ENCODE measurements at regions of chr10 and their contacts with region 1.

Region 1: GRCh38 chr10:92592761-92593618 is at the start of gene KIF11:
- DNase-seq: peak; percentile 99
- H3K4me3 ChIP-seq: peak within 1 kb of the TSS; percentile 46 to 98 (median 84)
- H3K27ac ChIP-seq: peak within 1 kb of the TSS; percentile 93 to 98 (median 96)
- H3K4me1 ChIP-seq: peaks cover 6 to 54% (median 32%) of the 10 kb centered on the region in 6 donors
- H3K27me3 ChIP-seq: no peaks in the 10 kb centered on the region
- CTCF ChIP-seq: no peak
- POLR2A ChIP-seq: peak in 2 of 3 donors; percentile 88 to 96
- total RNA-seq, gene KIF11: 1.8 to 7.3 (median 5.1) TPM

Region 2: GRCh38 chr10:92689663-92690210 is 96.7 kb after region 1 on chr10 and contains the start of gene HHEX:
- intact Hi-C with region 1: loop called (anchors 10 kb)
- DNase-seq: peak; percentile 98
- H3K4me3 ChIP-seq: peak within 1 kb of the TSS; percentile 57 to 83 (median 71)
- H3K27ac ChIP-seq: peak within 1 kb of the TSS; percentile 82 to 99 (median 98)
- H3K4me1 ChIP-seq: peaks cover 4 to 76% (median 55%) of the 10 kb centered on the region in 6 donors
- H3K27me3 ChIP-seq: peaks cover 0 to 51% (median 0%) of the 10 kb centered on the region in 7 donors
- CTCF ChIP-seq: peak in 2 of 11 experiments; percentile 10 to 12
- POLR2A ChIP-seq: peak in 2 of 3 donors; percentile 61 to 93
- total RNA-seq, gene HHEX: 45.9 to 74.3 (median 51.9) TPM

Region 3: DNA sequence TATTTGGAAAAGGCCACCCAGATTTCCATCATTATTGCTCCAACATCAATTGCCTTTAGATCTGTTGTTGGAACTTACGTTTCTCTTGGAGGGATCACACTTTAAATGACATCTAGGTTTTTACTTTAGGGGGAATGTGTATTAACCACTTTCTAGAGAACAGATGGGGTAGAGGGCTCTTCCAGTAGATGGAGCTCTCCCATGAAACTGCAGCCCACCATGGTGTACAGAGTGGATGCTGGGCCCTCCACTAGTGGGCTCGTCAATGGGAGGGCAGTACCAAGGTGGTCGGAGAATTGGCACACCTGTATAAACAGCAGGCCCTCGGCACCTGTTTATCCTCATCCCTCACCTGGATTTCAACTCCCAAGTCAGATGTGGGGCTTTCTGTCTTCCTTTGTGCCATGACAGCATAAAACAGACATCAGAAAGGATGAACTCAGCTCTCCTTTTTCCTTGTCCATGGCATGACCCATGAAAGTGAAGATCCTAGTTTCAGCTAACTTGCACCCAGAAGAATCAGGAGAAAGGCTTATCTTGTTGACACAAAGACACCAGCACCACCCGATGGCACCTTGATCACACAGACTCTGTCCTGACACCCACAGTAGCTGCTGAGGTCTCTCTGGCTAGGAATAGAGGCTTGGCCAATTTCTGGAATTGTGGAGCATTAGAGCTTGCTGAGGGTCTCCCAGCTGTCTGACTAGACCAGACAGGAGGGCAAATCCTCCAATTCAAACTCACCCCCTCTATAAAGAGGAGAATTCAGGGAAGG is 631.2 kb after region 1 on chr10:
- intact Hi-C with region 1: no loop called
- DNase-seq: no peak
- H3K4me3 ChIP-seq: no peak overlapping the region
- H3K27ac ChIP-seq: no peak overlapping the region
- H3K4me1 ChIP-seq: peaks cover 0 to 3% (median 0%) of the 10 kb centered on the region in 6 donors
- H3K27me3 ChIP-seq: peaks cover 0 to 11% (median 0%) of the 10 kb centered on the region in 7 donors
- CTCF ChIP-seq: no peak
- POLR2A ChIP-seq: no peak